ENCODE measurements at regions of chr7 and their contacts with region 1.

Region 1: DNA sequence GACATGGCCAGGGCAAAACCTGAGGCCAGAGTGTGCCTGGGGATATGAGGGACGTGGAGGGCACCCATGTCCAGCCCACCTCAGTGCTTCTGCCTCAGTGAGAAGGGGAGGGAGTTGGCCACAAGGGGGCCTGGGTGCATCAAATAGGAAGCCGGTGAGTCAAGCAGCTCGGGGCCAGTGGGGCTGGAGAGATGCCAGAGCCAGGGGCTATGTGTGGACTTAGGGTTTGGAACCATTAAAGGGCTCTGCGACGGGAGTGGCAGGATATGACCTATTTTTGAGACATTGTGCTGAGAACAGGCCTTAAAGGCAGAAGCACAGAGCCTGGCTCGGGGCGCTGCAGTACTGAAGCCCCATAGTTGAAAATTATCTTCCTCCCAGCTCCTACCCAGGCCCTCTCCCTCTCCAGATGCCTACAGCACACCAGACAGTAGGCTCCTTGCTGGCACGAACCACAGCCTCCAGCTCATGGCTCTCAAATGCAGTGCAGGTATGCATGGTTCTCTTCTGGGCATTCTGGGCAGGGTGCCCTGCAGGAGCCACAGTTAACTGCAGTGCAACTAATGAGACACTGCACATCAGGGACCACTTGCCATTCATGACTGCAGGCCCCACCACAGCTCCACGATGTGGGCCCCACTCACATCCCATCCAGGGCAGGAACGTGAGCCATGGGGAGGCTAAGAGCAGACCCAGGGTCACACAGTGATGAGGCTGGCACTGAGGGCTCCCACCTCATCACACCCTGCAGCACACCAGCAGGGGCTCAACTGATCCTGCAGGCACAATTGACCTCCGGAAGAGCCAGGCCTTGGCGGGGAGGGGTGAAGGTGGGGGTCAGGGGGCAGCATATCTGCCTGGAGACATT is 7.2 kb upstream of the PGAM2 start:
- DNase-seq: peak; percentile 94 to 96
- H3K4me3 ChIP-seq: peak overlapping the region; percentile 30; the same call in 1 of the 2 replicates
- H3K27ac ChIP-seq: peak overlapping the region; percentile 27
- H3K4me1 ChIP-seq: peaks cover 47% of the 10 kb centered on the region
- H3K27me3 ChIP-seq: no peaks in the 10 kb centered on the region
- CTCF ChIP-seq: peak; percentile 93

Region 2: GRCh38 chr7:44044315-44045225 is 28.0 kb before region 1 on chr7 and contains the start of gene DBNL:
- CTCF ChIA-PET with region 1: interaction called, 4 read pairs
- POLR2A ChIA-PET with region 1: interaction called, 11 read pairs
- intact Hi-C with region 1: loop called (anchors 2 kb)
- DNase-seq: peak; percentile 92 to 97
- H3K4me3 ChIP-seq: peak within 1 kb of the TSS; percentile 85
- H3K27ac ChIP-seq: no peak within 1 kb of the TSS
- H3K4me1 ChIP-seq: peaks cover 14% of the 10 kb centered on the region
- H3K27me3 ChIP-seq: no peaks in the 10 kb centered on the region
- CTCF ChIP-seq: no peak
- total RNA-seq, gene DBNL: 65.6 and 70.7 TPM in 2 replicates

Region 3: GRCh38 chr7:44123190-44124003 is 50.8 kb after region 1 on chr7 and contains the start of gene POLD2:
- CTCF ChIA-PET with region 1: interaction called, 6 read pairs
- POLR2A ChIA-PET with region 1: interaction called, 5 read pairs
- intact Hi-C with region 1: loop called (anchors 1 kb)
- DNase-seq: peak; percentile 94 to 100
- H3K4me3 ChIP-seq: peak within 1 kb of the TSS; percentile 65
- H3K27ac ChIP-seq: peak within 1 kb of the TSS; percentile 1; the same call in 1 of the 2 replicates
- H3K4me1 ChIP-seq: peaks cover 11% of the 10 kb centered on the region
- H3K27me3 ChIP-seq: no peaks in the 10 kb centered on the region
- CTCF ChIP-seq: no peak
- total RNA-seq, gene POLD2: 217 and 249 TPM in 2 replicates

Region 4: GRCh38 chr7:44307301-44307900 is 234.8 kb after region 1 on chr7:
- CTCF ChIA-PET with region 1: no interaction called
- POLR2A ChIA-PET with region 1: no interaction called
- intact Hi-C with region 1: loop called (anchors 1 kb)
- DNase-seq: peak; percentile 61 to 74
- H3K4me3 ChIP-seq: no peak overlapping the region
- H3K27ac ChIP-seq: no peak overlapping the region
- H3K4me1 ChIP-seq: no peaks in the 10 kb centered on the region
- H3K27me3 ChIP-seq: no peaks in the 10 kb centered on the region
- CTCF ChIP-seq: peak; percentile 61

Measured in PC-9 (cell line).